ENCODE measurements at regions of chr1 and their contacts with region 1.

Region 1: DNA sequence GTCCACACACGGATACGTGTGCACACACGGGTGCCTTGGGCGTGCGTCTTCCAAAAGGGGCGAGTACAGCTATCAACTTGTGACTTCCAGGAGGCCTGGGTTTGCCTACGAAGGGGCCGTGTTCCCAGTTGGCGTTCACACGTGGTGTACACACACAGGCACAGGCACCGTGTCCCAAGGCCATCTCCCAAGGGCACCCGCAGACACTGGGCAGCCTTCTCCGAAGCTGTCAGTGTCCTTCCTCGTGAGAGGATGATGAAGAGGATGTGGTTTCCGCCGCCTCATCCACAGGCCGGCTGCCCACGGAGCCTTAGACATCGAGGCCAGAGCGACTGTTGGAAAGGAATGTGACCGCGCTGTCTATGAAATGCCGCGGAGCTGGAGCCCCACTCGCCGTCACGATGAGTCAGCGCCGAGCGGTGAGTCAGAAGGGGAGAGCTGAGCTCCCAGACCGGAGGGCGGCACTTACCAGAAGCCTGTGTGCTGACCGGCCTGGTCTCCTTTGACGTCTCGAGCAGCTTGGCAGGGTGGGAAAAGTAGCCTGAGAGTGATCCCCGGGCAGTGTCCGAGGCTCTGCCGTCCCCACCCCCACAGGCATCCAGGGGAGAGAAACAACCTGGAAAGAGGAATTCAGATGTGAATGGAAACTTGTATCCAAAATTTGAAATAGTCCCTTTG is 141.4 kb upstream of the ARHGEF16 start:
- DNase-seq: peak; percentile 87 to 88
- ATAC-seq: peak; percentile 92 to 96 (median 94)
- H3K4me3 ChIP-seq: peak overlapping the region in 4 of 10 donors; percentile 0 to 28 (median 14)
- H3K27ac ChIP-seq: peak overlapping the region; percentile 86 to 98 (median 96)
- H3K4me1 ChIP-seq: peaks cover 13 to 68% (median 42%) of the 10 kb centered on the region in 9 donors
- H3K27me3 ChIP-seq: peaks cover 0 to 28% (median 7%) of the 10 kb centered on the region in 7 donors
- CTCF ChIP-seq: no peak

Region 2: DNA sequence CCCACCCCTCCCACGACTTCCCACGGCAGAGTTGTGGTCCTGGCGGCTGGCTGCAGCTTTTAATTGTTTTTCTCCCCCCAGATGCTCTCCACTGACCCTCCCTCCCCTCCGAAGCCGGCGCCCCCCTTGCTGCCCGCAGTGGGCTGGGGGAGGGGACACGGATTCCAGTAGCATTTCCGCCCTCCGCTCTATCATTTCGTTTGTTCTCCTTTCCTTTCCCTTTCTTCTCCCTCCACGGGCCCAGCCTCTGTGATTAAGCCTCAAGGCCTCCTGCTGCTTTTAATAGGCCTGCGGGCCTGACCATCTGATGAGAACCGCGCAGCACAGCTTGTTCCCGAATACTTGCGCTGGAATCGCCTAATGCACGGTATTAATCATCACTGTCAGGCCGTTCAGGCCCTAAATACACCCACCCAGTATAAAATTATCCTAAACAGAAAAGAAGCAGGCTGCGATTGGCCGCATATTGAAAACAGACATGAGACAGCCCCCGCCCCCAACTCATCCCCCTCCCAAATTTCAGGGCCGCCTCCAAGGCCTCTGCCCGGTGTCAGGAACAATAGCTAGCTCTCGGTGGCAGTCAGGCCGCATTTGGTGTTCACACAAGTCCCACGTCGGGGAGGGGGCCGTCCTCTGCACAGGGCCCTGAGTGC is 39.4 kb after region 1 on chr1:
- intact Hi-C with region 1: loop called in 3 of 10 experiments (anchors 2 to 5 kb)
- DNase-seq: no peak
- ATAC-seq: peak in 4 of 8 donors; percentile 6 to 40 (median 18)
- H3K4me3 ChIP-seq: peak overlapping the region in 1 of 10 donors; percentile 5
- H3K27ac ChIP-seq: peak overlapping the region; percentile 69 to 98 (median 88)
- H3K4me1 ChIP-seq: peaks cover 25 to 96% (median 59%) of the 10 kb centered on the region in 9 donors
- H3K27me3 ChIP-seq: peaks cover 0 to 56% (median 14%) of the 10 kb centered on the region in 7 donors
- CTCF ChIP-seq: no peak